ENCODE measurements at regions of chr9 and their contacts with region 1.

Region 1: DNA sequence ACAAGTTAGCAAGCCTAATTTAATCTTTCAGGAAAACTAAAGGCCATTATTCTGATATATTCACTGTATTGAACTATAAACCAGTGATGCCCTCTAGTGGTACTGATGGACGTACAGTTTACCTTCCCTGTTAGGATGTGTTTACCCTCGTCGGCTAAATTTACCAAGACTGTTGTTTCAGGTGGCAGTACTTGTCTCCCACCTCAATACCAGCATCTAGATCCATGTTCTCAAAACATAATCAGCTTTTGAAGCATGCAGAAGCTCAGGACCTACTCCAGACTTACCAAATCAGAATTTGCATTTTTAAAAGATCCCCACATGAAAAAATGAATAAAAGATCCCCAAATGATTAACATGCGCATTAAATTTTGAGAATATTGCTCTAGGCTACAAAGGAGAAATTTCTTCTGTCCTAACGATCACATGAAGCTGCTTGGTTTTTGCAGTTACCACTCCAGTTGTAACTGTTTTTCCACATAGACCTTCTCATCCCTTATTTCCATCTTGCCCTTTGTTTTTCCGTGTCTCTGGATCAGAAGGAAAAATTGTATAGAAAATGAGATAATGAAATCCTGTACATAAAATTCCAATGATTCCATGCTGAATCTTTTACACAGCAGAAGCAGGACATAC is 3.2 kb upstream of the BAAT start:
- DNase-seq: no peak
- ATAC-seq: peak; percentile 94
- H3K4me3 Mint-ChIP-seq: no peak overlapping the region
- H3K27ac Mint-ChIP-seq: peak overlapping the region; percentile 93
- H3K4me1 Mint-ChIP-seq: peaks cover 28% of the 10 kb centered on the region
- H3K27me3 Mint-ChIP-seq: no peaks in the 10 kb centered on the region
- CTCF ChIP-seq: peak; percentile 32

Region 2: GRCh38 chr9:101176384-101176783 is 211.6 kb before region 1 on chr9:
- CTCF ChIA-PET with region 1: no interaction called
- POLR2A ChIA-PET with region 1: no interaction called
- DNase-seq: peak; percentile 63
- ATAC-seq: peak; percentile 99
- H3K4me3 Mint-ChIP-seq: no peak overlapping the region
- H3K27ac Mint-ChIP-seq: no peak overlapping the region
- H3K4me1 Mint-ChIP-seq: no peaks in the 10 kb centered on the region
- H3K27me3 Mint-ChIP-seq: no peaks in the 10 kb centered on the region
- CTCF ChIP-seq: peak; percentile 66

Region 3: DNA sequence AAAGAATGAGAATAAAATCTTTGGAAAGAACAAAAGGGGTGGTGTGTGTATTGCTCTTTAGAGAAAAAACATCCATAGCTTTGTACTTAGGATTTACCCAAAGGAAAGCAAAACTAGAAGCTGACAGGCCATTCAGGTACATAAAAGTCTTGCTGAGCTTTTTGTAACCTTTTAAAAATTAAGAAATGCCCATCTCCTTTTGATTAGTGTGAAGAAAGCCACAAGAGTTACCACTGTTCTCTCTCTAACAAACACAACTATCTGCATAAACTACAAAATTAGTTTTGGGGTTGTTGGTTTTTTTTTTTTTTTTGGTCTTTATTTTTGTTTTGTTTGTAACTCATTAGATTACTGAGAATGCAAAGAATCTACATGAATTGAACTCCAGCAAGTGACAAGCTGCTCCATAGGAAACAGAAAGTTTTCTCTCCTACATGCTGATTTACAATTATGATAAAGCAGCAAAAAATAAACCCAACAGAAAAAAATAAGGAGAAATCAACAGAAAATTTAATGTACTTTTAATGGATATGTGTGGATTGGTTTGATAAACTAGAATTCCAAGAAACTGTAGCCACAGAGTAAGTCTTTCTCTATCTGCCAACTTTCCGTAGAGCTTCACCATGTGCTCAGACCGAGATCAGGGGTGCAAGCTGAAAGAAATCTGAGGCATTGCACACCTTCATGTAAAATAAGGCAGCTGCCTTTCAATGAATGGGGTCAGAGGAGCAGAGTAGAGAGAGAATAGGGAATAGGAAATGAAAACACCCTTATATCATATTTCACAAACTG is 15.5 kb before region 1 on chr9:
- CTCF ChIA-PET with region 1: interaction called, 13 read pairs
- POLR2A ChIA-PET with region 1: no interaction called
- DNase-seq: no peak
- ATAC-seq: no peak
- H3K4me3 Mint-ChIP-seq: no peak overlapping the region
- H3K27ac Mint-ChIP-seq: no peak overlapping the region
- H3K4me1 Mint-ChIP-seq: peaks cover 19% of the 10 kb centered on the region
- H3K27me3 Mint-ChIP-seq: no peaks in the 10 kb centered on the region
- CTCF ChIP-seq: no peak

Region 4: GRCh38 chr9:101398068-101398929 is 10.3 kb after region 1 on chr9 and contains the starts of genes MRPL50 and ZNF189:
- CTCF ChIA-PET with region 1: interaction called, 24 read pairs
- POLR2A ChIA-PET with region 1: interaction called, 7 read pairs
- DNase-seq: peak; percentile 96
- ATAC-seq: peak; percentile 97
- H3K4me3 Mint-ChIP-seq: peak within 1 kb of the TSS; percentile 99
- H3K27ac Mint-ChIP-seq: peak within 1 kb of the TSS; percentile 99
- H3K4me1 Mint-ChIP-seq: peaks cover 25% of the 10 kb centered on the region
- H3K27me3 Mint-ChIP-seq: no peaks in the 10 kb centered on the region
- CTCF ChIP-seq: no peak
- total RNA-seq, gene MRPL50: 16.6 to 19.6 TPM (median 17.0 TPM) in 3 replicates
- total RNA-seq, gene ZNF189: 10.1 to 10.4 TPM (median 10.3 TPM) in 3 replicates